Right lobe of liver (tissue), 6 donors: ENCODE measurements at regions of chr7 and their contacts with region 1.

Region 1: DNA sequence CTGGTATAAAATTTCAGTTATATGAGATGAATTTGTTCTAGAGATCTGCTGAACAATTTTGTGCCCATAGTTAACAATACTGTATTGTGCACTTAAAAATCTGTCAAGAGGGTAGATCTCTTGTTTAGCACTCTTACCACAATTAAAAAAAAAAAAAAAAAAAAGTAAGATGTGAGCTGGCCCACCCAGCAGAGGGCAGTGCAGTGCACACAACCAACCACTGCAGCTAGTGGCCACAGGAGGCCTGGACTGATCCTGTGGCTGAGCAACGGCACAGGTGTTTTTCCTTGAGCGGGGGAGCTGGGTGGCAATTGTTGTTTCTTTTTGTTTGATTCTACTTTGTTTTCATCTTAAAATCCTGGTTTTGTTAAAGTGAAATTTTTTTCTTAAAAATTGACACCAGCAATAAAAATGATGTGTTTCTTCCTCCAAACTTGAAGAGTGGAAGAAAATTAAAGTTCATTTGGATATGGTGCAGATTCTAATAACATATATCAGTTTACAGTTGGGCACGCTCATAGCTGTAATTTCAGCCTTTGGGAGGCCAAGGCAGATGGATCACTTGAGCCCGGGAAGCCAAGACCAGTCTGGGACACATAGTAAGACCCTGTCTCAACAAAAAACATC is 171.1 kb upstream of the TBX20 start:
- DNase-seq: peak; percentile 66 to 73 (median 67)
- ATAC-seq: peak; percentile 94 to 97 (median 94)
- H3K4me3 ChIP-seq: no peak overlapping the region
- H3K27ac ChIP-seq: no peak overlapping the region
- H3K4me1 ChIP-seq: no peaks in the 10 kb centered on the region
- H3K27me3 ChIP-seq: no peaks in the 10 kb centered on the region
- CTCF ChIP-seq: peak; percentile 68 to 79 (median 71)
- POLR2A ChIP-seq: no peak

Region 2: GRCh38 chr7:35519971-35520809 is 95.2 kb after region 1 on chr7:
- intact Hi-C with region 1: loop called in 1 of 2 experiments (anchors 10 kb)
- DNase-seq: peak; percentile 65 to 83 (median 67)
- ATAC-seq: peak; percentile 98 to 100 (median 100)
- H3K4me3 ChIP-seq: no peak overlapping the region
- H3K27ac ChIP-seq: no peak overlapping the region
- H3K4me1 ChIP-seq: no peaks in the 10 kb centered on the region
- H3K27me3 ChIP-seq: no peaks in the 10 kb centered on the region
- CTCF ChIP-seq: peak; percentile 83 to 94 (median 90)
- POLR2A ChIP-seq: no peak

Region 3: GRCh38 chr7:35670856-35671569 is 246.0 kb after region 1 on chr7:
- intact Hi-C with region 1: no loop called
- DNase-seq: no peak
- ATAC-seq: no peak
- H3K4me3 ChIP-seq: no peak overlapping the region
- H3K27ac ChIP-seq: no peak overlapping the region
- H3K4me1 ChIP-seq: no peaks in the 10 kb centered on the region
- H3K27me3 ChIP-seq: no peaks in the 10 kb centered on the region
- CTCF ChIP-seq: no peak
- POLR2A ChIP-seq: no peak